Tibial artery (tissue), 4 donors: ENCODE measurements at regions of chr22 and their contacts with region 1.

Region 1: GRCh38 chr22:17422736-17423343 is 53.6 kb downstream of the CECR2 start:
- DNase-seq: no peak
- H3K4me3 ChIP-seq: no peak overlapping the region
- H3K27ac ChIP-seq: no peak overlapping the region
- H3K4me1 ChIP-seq: no peaks in the 10 kb centered on the region
- H3K27me3 ChIP-seq: no peaks in the 10 kb centered on the region
- CTCF ChIP-seq: no peak

Region 2: GRCh38 chr22:17348461-17349113 is 74.3 kb before region 1 on chr22:
- intact Hi-C with region 1: loop called (anchors 10 kb)
- DNase-seq: no peak
- H3K4me3 ChIP-seq: no peak overlapping the region
- H3K27ac ChIP-seq: no peak overlapping the region
- H3K4me1 ChIP-seq: no peaks in the 10 kb centered on the region
- H3K27me3 ChIP-seq: no peaks in the 10 kb centered on the region
- CTCF ChIP-seq: no peak